ENCODE measurements at regions of chr13 and their contacts with region 1.

Region 1: DNA sequence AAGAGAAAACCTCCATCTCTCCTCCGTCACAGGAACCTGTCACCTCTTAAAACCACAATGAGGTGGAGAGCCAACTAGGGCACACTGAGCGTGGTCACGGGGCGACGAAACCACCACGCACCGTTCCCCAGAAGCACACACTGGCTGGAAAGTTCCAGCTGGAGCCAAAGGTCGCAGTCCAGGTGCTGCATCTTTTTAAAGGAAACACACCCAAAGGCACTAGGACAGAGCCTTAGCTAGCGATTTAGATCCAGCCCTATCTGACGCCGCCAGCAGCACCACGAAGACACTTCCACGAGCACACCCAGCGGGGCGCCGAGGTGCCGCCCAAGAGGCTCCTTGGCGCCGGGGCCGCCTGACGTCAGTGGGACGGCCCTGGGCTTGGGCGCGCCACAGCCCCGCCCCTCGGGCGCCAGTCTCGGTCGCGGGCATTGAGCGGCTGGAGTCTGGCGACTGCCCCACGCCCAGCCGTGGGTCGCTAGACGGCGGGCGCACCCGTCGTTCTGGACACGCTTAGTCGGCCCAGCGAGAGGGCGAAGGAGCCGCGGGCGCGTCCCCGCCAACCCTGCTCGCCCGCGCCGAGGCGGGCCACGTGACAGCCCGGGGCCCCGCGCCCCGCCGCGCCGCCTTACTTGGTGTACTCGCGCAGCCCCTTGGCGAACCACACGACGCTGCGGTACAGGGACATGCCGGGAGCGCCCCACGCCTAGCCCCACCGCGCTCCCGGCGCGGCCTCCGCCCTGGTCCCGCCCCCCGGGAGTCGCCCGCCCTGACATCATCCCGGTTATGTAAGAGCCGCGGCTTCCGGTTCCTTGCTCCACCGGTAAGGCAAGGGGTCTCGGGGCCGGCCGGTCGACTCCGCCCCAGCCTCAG is at the start of gene DHRS12:
- DNase-seq: peak; percentile 88 to 96
- ATAC-seq: peak; percentile 70 to 90 (median 76)
- H3K4me3 ChIP-seq: peak within 1 kb of the TSS; percentile 63
- H3K4me3 Mint-ChIP-seq: peak within 1 kb of the TSS; percentile 94
- H3K27ac ChIP-seq: peak within 1 kb of the TSS; percentile 97
- H3K27ac Mint-ChIP-seq: peak within 1 kb of the TSS; percentile 91 to 99
- H3K4me1 ChIP-seq: peaks cover 27% of the 10 kb centered on the region
- H3K4me1 Mint-ChIP-seq: peaks cover 34 to 35% of the 10 kb centered on the region in 2 donors
- H3K27me3 ChIP-seq: no peaks in the 10 kb centered on the region
- H3K27me3 Mint-ChIP-seq: peaks cover 0 to 8% of the 10 kb centered on the region in 2 donors
- CTCF ChIP-seq: no peak
- total RNA-seq, gene DHRS12: 7.0 to 11.7 (median 10.4) TPM

Region 2: GRCh38 chr13:49936085-49936940 is 1867.3 kb before region 1 on chr13 and contains the start of gene SPRYD7:
- intact Hi-C with region 1: loop called (anchors 5 kb)
- DNase-seq: peak; percentile 96 to 97
- ATAC-seq: peak; percentile 95 to 99 (median 97)
- H3K4me3 ChIP-seq: peak within 1 kb of the TSS; percentile 64
- H3K4me3 Mint-ChIP-seq: peak within 1 kb of the TSS; percentile 93
- H3K27ac ChIP-seq: peak within 1 kb of the TSS; percentile 46
- H3K27ac Mint-ChIP-seq: peak within 1 kb of the TSS; percentile 79 to 91
- H3K4me1 ChIP-seq: peaks cover 14% of the 10 kb centered on the region
- H3K4me1 Mint-ChIP-seq: peaks cover 17 to 20% of the 10 kb centered on the region in 2 donors
- H3K27me3 ChIP-seq: no peaks in the 10 kb centered on the region
- H3K27me3 Mint-ChIP-seq: no peaks in the 10 kb centered on the region
- CTCF ChIP-seq: peak; percentile 78
- total RNA-seq, gene SPRYD7: 3.0 to 6.2 (median 4.4) TPM

Region 3: GRCh38 chr13:51452361-51453206 is 351.1 kb before region 1 on chr13 and contains the start of gene INTS6:
- intact Hi-C with region 1: loop called (anchors 1 kb)
- DNase-seq: peak; percentile 99
- ATAC-seq: peak; percentile 78 to 94 (median 81)
- H3K4me3 ChIP-seq: peak within 1 kb of the TSS; percentile 85
- H3K4me3 Mint-ChIP-seq: peak within 1 kb of the TSS; percentile 94
- H3K27ac ChIP-seq: peak within 1 kb of the TSS; percentile 96
- H3K27ac Mint-ChIP-seq: peak within 1 kb of the TSS; percentile 92 to 96
- H3K4me1 ChIP-seq: peaks cover 9% of the 10 kb centered on the region
- H3K4me1 Mint-ChIP-seq: peaks cover 45 to 48% of the 10 kb centered on the region in 2 donors
- H3K27me3 ChIP-seq: no peaks in the 10 kb centered on the region
- H3K27me3 Mint-ChIP-seq: no peaks in the 10 kb centered on the region
- CTCF ChIP-seq: no peak
- total RNA-seq, gene INTS6: 89.2 to 142 (median 110) TPM

Region 4: DNA sequence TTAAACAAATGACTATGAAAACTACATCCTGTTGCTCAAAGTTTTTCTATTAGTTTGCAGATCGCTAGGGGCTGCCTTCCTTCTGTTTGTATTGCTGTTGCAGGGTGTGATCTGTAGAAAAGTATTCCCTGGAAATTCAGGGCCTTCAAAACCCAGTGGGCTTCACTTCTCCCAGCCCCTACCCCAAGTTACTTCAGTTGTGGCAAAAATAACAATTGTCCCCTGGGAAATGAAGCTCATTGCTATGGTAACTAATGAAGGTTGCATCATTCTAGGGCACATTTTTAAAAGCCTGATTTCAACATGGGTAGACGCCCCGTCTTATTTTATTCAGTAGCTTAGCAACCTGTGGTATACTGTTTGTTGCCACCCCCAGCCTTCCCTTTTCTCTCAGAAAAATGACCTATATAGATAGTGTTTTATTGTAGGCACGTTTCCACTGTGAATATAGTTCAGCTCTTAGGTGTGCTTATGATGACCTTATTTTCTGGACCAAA is 158.5 kb before region 1 on chr13:
- intact Hi-C with region 1: loop called (anchors 1 kb)
- DNase-seq: peak; percentile 40 to 77
- ATAC-seq: peak; percentile 81 to 91 (median 84)
- H3K4me3 ChIP-seq: no peak overlapping the region
- H3K4me3 Mint-ChIP-seq: peak overlapping the region; percentile 61
- H3K27ac ChIP-seq: peak overlapping the region; percentile 86
- H3K27ac Mint-ChIP-seq: peak overlapping the region; percentile 96
- H3K4me1 ChIP-seq: peaks cover 27% of the 10 kb centered on the region
- H3K4me1 Mint-ChIP-seq: peaks cover 40 to 48% of the 10 kb centered on the region in 2 donors
- H3K27me3 ChIP-seq: no peaks in the 10 kb centered on the region
- H3K27me3 Mint-ChIP-seq: no peaks in the 10 kb centered on the region
- CTCF ChIP-seq: no peak

Region 5: DNA sequence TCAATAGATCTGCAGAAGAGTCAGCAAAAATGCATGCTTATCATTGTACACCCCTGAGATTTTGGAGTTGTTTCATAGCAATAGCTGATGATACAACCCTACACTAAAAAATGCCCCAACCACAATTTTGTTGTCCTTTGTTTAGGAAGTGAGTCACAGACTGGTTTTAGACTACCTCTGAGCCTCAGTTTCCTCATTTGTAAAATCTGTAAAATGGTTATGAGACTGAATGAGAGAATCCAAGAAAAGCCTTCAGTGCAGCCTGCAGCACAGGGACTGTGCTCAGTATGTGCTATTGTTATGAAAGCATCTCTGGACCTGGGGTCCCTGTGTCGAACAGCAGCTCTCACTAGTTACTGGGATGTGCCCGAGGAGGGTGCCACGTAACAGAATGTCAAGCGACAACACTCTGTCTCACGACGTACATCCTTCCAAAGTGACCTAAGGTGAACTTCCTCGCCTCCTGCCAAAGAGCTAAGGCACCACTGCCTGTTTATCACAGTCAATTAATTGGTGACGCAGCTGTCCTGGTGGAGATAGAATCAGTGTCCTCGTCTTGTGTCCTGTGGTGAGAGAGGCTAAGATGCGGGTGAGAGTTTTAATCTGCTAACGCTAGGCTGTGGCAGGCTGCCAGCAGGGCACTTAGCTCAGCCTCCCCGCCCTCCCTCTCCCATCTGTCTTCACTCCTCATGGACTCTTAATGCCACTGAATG is 17.8 kb before region 1 on chr13:
- intact Hi-C with region 1: loop called (anchors 1 kb)
- DNase-seq: no peak
- ATAC-seq: peak; percentile 62 to 88 (median 76)
- H3K4me3 ChIP-seq: no peak overlapping the region
- H3K4me3 Mint-ChIP-seq: no peak overlapping the region
- H3K27ac ChIP-seq: no peak overlapping the region
- H3K27ac Mint-ChIP-seq: peak overlapping the region in 1 of 2 donors; percentile 20
- H3K4me1 ChIP-seq: no peaks in the 10 kb centered on the region
- H3K4me1 Mint-ChIP-seq: peaks cover 0 to 14% of the 10 kb centered on the region in 2 donors
- H3K27me3 ChIP-seq: no peaks in the 10 kb centered on the region
- H3K27me3 Mint-ChIP-seq: no peaks in the 10 kb centered on the region
- CTCF ChIP-seq: no peak

Region 6: GRCh38 chr13:52450012-52450792 is 646.5 kb after region 1 on chr13 and contains the start of gene VPS36:
- intact Hi-C with region 1: loop called (anchors 2 kb)
- DNase-seq: peak; percentile 97 to 99
- ATAC-seq: peak; percentile 72 to 92 (median 75)
- H3K4me3 ChIP-seq: peak within 1 kb of the TSS; percentile 63
- H3K4me3 Mint-ChIP-seq: peak within 1 kb of the TSS; percentile 97
- H3K27ac ChIP-seq: peak within 1 kb of the TSS; percentile 74
- H3K27ac Mint-ChIP-seq: peak within 1 kb of the TSS; percentile 87 to 93
- H3K4me1 ChIP-seq: peaks cover 20% of the 10 kb centered on the region
- H3K4me1 Mint-ChIP-seq: peaks cover 39 to 42% of the 10 kb centered on the region in 2 donors
- H3K27me3 ChIP-seq: no peaks in the 10 kb centered on the region
- H3K27me3 Mint-ChIP-seq: peaks cover 0 to 2% of the 10 kb centered on the region in 2 donors
- CTCF ChIP-seq: peak; percentile 99
- total RNA-seq, gene VPS36: 59.0 to 64.2 (median 63.3) TPM

Measured in natural killer cell (primary cell).